Cardiac septum (tissue), 1 donor: ENCODE measurements at regions of chr17 and their contacts with region 1.

Region 1: GRCh38 chr17:6753006-6753445 is 2.8 kb upstream of the XAF1 start:
- DNase-seq: peak; percentile 89

Region 2: GRCh38 chr17:7021993-7022778 is 269.2 kb after region 1 on chr17:
- intact Hi-C with region 1: loop called (anchors 5 kb)
- DNase-seq: peak; percentile 89